ENCODE measurements at regions of chr19 and their contacts with region 1.

Region 1: DNA sequence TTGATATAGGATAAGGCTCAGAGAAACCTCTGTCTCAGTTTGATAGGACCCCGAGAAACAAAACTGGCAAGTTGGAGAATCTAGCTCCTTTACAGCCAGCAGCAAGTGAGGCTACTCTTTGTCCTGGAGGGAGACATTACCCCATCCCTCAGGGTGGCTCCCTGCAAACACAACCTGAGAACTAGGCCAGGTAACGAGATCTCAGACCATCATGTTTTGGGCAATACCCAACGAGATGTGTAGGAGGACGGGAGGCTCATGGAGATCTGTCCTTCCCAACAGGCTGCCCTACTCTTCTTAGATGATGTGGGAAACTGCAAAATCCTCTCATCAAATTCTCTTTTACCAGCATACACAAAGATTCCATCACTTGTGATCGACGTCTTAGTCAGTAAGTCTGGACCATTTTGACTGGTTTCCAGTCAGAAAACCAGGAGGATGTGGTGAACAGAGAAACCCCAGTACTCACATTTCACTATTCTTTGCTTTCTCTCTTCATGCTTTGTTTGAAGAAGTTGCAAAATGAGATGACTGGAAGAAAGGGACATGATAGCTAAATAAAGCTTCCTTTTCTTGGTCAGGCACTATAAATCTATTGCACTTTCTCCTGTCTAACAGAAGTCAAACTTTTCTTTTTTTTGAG is 6.0 kb upstream of the CTU1 start:
- DNase-seq: peak; percentile 42
- ATAC-seq: peak; percentile 86
- H3K4me3 Mint-ChIP-seq: no peak overlapping the region
- H3K27ac Mint-ChIP-seq: peak overlapping the region; percentile 90
- H3K4me1 Mint-ChIP-seq: peaks cover 7% of the 10 kb centered on the region
- H3K27me3 Mint-ChIP-seq: no peaks in the 10 kb centered on the region

Region 2: DNA sequence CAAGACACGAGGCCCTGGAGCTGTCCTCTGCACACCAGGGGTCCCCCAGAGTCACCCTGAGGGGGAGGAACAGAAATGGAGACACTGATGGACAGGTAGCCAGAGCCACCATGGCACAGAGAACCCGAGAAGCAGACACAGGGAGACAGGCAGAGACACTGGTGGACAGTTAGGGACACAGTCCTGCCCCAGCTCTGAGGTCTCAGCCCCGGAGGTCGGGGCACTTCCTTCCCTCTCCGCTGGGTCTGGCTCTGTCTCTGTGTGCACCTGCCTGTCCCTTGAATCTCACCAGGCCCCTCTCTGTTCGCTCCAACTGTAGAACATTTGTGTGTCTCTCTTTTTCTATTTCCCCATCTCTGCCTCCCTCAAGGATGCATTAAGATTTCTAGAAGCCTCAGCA is 36.1 kb before region 1 on chr19:
- CTCF ChIA-PET with region 1: no interaction called
- POLR2A ChIA-PET with region 1: no interaction called
- intact Hi-C with region 1: no loop called
- DNase-seq: no peak
- ATAC-seq: no peak
- H3K4me3 Mint-ChIP-seq: no peak overlapping the region
- H3K27ac Mint-ChIP-seq: no peak overlapping the region
- H3K4me1 Mint-ChIP-seq: no peaks in the 10 kb centered on the region
- H3K27me3 Mint-ChIP-seq: peaks cover 13% of the 10 kb centered on the region

Region 3: GRCh38 chr19:51127755-51128154 is 13.5 kb after region 1 on chr19:
- CTCF ChIA-PET with region 1: interaction called, 5 read pairs
- POLR2A ChIA-PET with region 1: interaction called, 4 read pairs
- intact Hi-C with region 1: loop called in 1 of 2 experiments (anchors 2 kb)
- DNase-seq: no peak
- ATAC-seq: no peak
- H3K4me3 Mint-ChIP-seq: no peak overlapping the region
- H3K27ac Mint-ChIP-seq: no peak overlapping the region
- H3K4me1 Mint-ChIP-seq: peaks cover 79% of the 10 kb centered on the region
- H3K27me3 Mint-ChIP-seq: no peaks in the 10 kb centered on the region

Measured in activated CD4-positive, alpha-beta T cell treated with anti-CD3 and anti-CD28 coated beads for 36 hours (primary cell).